KBM-7 (cell line): ENCODE measurements at regions of chr10 and their contacts with region 1.

Region 1: DNA sequence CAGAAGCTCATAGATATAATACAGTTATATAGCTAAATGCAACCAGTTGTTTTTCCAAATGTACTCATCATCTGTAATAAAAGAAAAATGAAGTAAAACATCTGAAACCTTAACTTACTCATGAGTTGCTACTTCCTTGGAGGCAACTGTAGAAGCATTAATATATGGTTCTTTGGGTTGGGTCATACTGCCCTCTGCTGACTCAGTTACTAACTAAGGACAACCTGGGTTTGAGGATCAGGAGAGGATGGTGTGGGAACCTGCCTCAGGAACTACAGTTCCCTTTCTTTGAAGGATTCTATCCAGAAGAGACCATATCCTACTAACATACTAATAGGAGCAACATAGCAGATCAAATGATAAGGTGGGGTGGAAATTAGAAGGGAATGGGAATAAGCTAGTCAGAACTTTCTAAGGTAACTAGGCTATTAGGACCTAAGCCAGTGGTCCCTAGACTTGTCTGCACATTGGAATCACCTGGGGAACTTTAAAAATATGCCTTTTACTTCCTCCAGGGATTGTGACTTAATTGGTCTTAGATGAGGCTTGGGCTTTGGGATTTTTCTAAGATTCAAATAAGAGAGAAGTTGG is 20.7 kb downstream of the COX15 start:
- DNase-seq: peak; percentile 78

Region 2: DNA sequence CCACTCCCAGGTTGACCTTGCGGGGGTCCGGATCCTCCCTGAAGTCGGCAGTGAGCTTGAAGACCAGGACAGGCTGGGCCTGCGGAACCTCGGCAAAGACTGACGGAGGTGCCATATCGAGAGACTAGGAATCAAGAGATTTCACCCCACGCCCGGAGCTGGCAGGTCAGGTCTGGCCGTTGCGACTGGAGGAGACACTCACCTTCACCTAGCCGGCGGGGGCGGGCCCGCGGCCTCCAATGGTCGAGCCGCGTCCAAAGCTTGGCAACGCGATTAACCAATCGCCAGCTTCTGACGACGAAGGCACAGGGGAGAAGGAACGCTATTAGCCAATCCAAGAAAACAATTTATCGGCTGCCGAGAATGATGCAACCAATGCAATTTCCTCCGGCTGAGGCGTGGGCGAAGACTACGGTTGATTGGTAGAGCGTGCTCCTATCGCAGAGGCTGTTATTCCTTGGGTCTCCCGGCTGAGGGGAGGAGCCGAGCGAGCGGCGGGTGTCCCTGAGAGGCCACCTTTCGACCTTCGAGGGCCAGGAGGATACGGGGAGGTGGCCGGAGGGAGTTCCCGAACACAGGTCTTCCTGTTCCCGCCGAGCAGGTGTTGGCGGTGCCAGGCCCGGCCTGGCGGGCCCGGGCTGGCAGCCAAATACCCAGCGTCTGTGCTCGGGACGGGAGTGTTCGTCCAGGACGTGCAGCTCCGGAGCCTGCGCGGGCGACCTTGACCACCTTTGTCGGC is 280.6 kb before region 1 on chr10 and contains the start of gene GOT1:
- in situ Hi-C with region 1: loop called (anchors 25 kb)
- DNase-seq: peak; percentile 99